Heart left ventricle (tissue), 16 donors: ENCODE measurements at regions of chr1 and their contacts with region 1.

Region 1: DNA sequence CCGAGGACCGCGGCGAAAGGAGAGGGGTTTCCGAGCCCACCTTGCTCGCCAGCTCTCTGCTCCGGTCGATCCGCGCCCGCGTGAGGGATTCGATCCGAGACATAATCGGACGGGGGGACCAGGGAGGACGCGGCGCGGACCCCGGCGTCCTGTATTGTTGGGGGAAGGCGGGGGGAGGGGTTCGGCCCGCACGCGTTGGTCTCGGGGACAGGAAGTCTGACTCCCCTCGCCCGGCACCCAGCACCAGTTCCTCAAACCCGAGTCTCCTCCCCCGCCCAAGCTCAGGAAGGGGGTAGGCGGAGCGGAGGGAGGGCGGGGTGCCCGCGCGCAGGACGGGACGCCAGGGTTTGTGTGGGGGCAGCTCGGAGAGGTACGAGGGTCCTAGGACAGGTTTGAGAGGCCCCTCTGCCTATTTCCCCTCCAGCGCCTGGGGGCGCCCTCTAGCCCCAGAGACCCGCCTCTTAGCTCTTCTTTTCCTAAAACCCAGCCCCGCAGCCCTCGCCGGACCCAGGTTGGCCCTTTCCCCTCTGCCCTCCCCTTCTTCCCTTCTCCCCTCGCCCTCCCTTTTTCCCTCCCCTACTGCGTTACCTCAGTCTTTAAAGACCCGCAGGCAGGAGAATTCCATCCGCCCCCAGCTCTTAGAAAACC is at the start of gene ARHGEF2:
- DNase-seq: peak; percentile 89 to 92 (median 91)
- ATAC-seq: peak; percentile 33 to 75 (median 73)
- H3K4me3 ChIP-seq: peak within 1 kb of the TSS; percentile 65 to 97 (median 86)
- H3K27ac ChIP-seq: peak within 1 kb of the TSS; percentile 91 to 100 (median 98)
- H3K4me1 ChIP-seq: peaks cover 23 to 93% (median 66%) of the 10 kb centered on the region in 12 donors
- H3K27me3 ChIP-seq: no peaks in the 10 kb centered on the region
- CTCF ChIP-seq: peak in 8 of 12 donors; percentile 0 to 51 (median 32)
- POLR2A ChIP-seq: peak in 1 of 2 donors; percentile 43
- total RNA-seq, gene ARHGEF2: 34.7 to 98.6 (median 61.6) TPM

Region 2: DNA sequence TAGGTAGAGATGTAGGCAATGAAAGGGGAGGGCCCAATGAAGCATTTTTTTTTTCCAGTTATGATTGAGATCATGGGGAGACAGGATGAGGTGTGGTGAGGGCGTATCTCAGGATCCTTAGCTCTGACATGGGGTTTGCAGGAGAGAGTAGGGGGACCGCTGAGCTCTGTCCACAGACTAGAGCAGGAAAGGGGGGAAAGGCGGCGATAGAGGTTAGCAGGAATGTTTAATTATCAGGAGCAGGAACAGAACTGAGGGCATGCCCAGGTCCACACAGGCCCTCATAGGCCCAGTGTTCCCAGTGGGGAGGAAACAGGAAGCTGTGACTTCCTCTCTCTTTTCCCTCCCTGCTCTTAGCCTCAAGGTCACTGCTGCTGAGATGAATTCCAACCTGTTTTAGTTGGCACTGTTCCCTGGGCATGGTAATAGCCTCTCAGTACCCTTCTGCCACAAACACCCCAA is 37.9 kb before region 1 on chr1:
- intact Hi-C with region 1: loop called in 6 of 10 experiments (anchors 2 to 5 kb)
- DNase-seq: peak in 3 of 5 donors; percentile 52 to 75 (median 60)
- ATAC-seq: peak; percentile 69 to 87 (median 76)
- H3K4me3 ChIP-seq: no peak overlapping the region
- H3K27ac ChIP-seq: peak overlapping the region; percentile 67 to 92 (median 82)
- H3K4me1 ChIP-seq: peaks cover 4 to 71% (median 47%) of the 10 kb centered on the region in 12 donors
- H3K27me3 ChIP-seq: no peaks in the 10 kb centered on the region
- CTCF ChIP-seq: no peak
- POLR2A ChIP-seq: no peak

Region 3: GRCh38 chr1:155961937-155962336 is 16.5 kb before region 1 on chr1:
- intact Hi-C with region 1: loop called in 1 of 10 experiments (anchors 1 kb)
- DNase-seq: peak; percentile 61 to 87 (median 72)
- ATAC-seq: peak; percentile 50 to 81 (median 72)
- H3K4me3 ChIP-seq: peak overlapping the region in 1 of 12 donors; percentile 5
- H3K27ac ChIP-seq: peak overlapping the region in 11 of 12 donors; percentile 58 to 89 (median 71)
- H3K4me1 ChIP-seq: peaks cover 18 to 70% (median 45%) of the 10 kb centered on the region in 12 donors
- H3K27me3 ChIP-seq: no peaks in the 10 kb centered on the region
- CTCF ChIP-seq: peak in 10 of 12 donors; percentile 20 to 54 (median 36)
- POLR2A ChIP-seq: no peak

Region 4: GRCh38 chr1:156786655-156787054 is 808.2 kb after region 1 on chr1:
- intact Hi-C with region 1: no loop called
- DNase-seq: no peak
- ATAC-seq: peak in 1 of 4 donors; percentile 26
- H3K4me3 ChIP-seq: no peak overlapping the region
- H3K27ac ChIP-seq: no peak overlapping the region
- H3K4me1 ChIP-seq: peaks cover 0 to 10% (median 5%) of the 10 kb centered on the region in 12 donors
- H3K27me3 ChIP-seq: no peaks in the 10 kb centered on the region
- CTCF ChIP-seq: no peak
- POLR2A ChIP-seq: no peak